ENCODE measurements at regions of chr11 and their contacts with region 1.

Region 1: DNA sequence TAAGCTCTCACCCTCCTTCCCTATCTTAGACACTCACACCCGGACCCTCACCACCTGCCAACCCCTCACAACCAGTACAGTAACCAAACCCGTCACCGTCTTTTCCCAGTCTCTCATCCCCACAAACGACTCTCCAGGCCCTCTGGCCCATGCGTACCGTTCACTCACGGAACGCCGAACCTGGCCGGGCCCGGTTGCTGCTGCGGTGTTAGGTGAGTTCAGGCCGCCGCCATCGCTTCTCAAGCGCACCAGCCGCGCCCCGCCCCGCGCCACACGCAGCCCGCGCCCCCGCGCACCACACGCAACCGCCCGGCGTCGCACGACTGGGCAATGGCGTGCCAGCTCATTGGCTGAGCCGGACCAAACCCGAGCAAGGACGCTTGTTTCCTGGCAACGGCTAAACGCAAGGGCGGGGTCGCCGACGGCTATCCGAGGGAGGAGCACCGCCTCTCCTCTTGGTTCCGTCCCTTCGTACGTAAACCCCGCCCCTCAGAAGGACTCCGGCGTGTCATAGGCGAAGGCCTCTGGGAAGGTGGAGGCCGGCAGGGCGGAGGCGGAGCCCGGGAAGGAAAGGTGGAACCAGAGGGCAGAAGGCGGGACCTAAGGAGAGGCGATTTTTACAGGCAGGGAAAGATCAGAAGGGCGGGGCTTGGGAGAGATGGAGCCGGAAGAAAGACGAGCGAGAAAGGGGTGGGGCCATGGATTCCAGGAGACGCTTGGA is at the start of gene FHIP1B:
- DNase-seq: peak; percentile 100
- H3K4me3 ChIP-seq: peak within 1 kb of the TSS; percentile 54 to 79
- H3K27ac ChIP-seq: peak within 1 kb of the TSS; percentile 78 to 83
- H3K4me1 ChIP-seq: peaks cover 0 to 12% of the 10 kb centered on the region in 2 donors
- H3K27me3 ChIP-seq: no peaks in the 10 kb centered on the region
- CTCF ChIP-seq: peak in 1 of 3 experiments; percentile 5
- total RNA-seq, gene FHIP1B: 31.9 TPM

Region 2: GRCh38 chr11:5684646-5685362 is 549.7 kb before region 1 on chr11 and contains the start of gene TRIM5:
- intact Hi-C with region 1: loop called (anchors 5 kb)
- DNase-seq: peak; percentile 70 to 96
- H3K4me3 ChIP-seq: peak within 1 kb of the TSS; percentile 60 to 64
- H3K27ac ChIP-seq: peak within 1 kb of the TSS; percentile 88 to 94
- H3K4me1 ChIP-seq: peaks cover 3 to 12% of the 10 kb centered on the region in 2 donors
- H3K27me3 ChIP-seq: no peaks in the 10 kb centered on the region
- CTCF ChIP-seq: peak; percentile 48 to 72 (median 55)
- total RNA-seq, gene TRIM5: 45.1 TPM

Region 3: DNA sequence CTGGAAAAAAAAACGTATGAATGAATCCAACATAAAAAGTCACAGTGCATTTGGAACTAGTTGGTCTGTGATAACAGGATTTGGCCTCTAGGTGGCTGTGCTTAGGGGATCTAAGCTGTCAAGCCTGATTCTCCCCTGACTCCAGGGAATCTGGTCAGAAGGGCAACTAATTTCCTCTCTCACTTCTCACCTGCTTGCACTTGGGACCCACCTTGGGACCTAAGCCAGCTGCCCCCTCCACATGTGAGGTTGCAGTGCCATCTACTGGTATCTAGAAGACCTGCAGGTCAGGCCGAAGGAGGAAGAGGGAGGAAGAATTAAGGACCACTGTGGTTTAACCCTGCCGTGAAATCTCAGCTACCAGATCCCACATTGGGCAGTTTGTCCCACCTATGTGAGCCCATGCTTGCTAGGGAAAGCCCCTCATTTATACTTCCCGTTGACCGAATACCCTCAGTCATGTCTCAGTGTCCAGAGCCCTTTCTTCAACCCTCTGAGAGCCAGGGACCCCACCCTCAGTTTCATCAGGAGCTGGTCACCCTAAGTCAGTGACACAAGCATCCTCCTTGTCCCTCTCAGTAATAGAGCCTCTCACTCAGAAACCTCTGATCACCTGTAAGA is 118.9 kb after region 1 on chr11:
- intact Hi-C with region 1: loop called (anchors 1 kb)
- DNase-seq: peak in 1 of 2 donors; percentile 72
- H3K4me3 ChIP-seq: no peak overlapping the region
- H3K27ac ChIP-seq: no peak overlapping the region
- H3K4me1 ChIP-seq: peaks cover 5 to 10% of the 10 kb centered on the region in 2 donors
- H3K27me3 ChIP-seq: no peaks in the 10 kb centered on the region
- CTCF ChIP-seq: peak; percentile 81 to 96 (median 95)

Region 4: GRCh38 chr11:6389921-6390724 is 155.6 kb after region 1 on chr11 and contains the start of gene SMPD1:
- intact Hi-C with region 1: loop called (anchors 1 kb)
- DNase-seq: peak; percentile 92 to 96
- H3K4me3 ChIP-seq: peak within 1 kb of the TSS; percentile 89 to 96
- H3K27ac ChIP-seq: peak within 1 kb of the TSS; percentile 90 to 95
- H3K4me1 ChIP-seq: peaks cover 9 to 14% of the 10 kb centered on the region in 2 donors
- H3K27me3 ChIP-seq: no peaks in the 10 kb centered on the region
- CTCF ChIP-seq: no peak
- total RNA-seq, gene SMPD1: 48.6 TPM

Region 5: GRCh38 chr11:6443269-6444003 is 208.9 kb after region 1 on chr11:
- intact Hi-C with region 1: no loop called
- DNase-seq: no peak
- H3K4me3 ChIP-seq: no peak overlapping the region
- H3K27ac ChIP-seq: peak overlapping the region; percentile 47 to 64
- H3K4me1 ChIP-seq: peaks cover 0 to 3% of the 10 kb centered on the region in 2 donors
- H3K27me3 ChIP-seq: no peaks in the 10 kb centered on the region
- CTCF ChIP-seq: peak; percentile 55 to 69 (median 60)

Region 6: DNA sequence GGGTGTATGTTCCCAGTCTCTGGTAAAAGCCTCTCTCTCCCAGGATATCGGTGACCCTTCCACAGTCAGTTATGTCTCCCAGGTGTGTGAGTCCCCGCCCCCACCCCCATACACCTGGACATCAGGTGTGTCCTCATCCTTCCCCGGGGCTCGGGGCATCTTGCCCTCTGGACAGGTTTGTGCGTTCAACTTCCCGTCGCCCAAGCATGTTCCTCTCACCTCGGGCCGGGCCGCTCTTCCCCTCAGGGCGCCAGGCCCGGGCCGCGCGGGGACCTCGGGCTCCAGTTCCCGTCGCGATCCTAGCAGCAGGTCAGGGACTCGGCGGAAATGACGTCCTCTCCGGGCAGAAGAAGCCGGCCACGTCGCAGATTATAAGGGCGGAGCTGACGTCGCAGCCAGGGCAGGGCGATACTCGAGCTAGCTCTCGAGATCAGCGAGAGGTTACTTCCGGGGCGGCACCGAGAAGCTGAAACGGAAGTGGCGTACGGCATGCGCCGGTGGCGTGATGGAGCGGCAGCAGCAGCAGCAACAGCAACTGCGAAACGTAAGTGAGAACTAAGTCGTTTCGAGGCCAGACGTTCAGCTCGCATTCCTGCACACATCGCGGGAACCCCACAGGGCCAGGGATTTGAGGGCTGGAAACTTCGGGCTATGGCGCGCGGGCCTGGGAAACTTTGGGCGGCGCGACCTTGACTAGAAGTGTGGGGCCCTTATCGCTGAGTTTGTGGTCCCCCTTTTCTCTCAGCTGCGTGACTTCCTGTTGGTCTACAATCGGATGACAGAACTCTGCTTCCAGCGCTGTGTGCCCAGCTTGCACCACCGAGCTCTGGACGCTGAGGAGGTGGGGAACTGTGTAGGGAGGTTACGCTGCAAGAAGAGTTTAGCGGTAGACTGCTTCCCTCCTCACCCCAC is 246.7 kb after region 1 on chr11 and contains the starts of genes ARFIP2 and TIMM10B:
- intact Hi-C with region 1: loop called (anchors 2 kb)
- DNase-seq: peak; percentile 96 to 99
- H3K4me3 ChIP-seq: peak within 1 kb of the TSS; percentile 92 to 94
- H3K27ac ChIP-seq: peak within 1 kb of the TSS; percentile 95
- H3K4me1 ChIP-seq: peaks cover 7 to 27% of the 10 kb centered on the region in 2 donors
- H3K27me3 ChIP-seq: no peaks in the 10 kb centered on the region
- CTCF ChIP-seq: no peak
- total RNA-seq, gene ARFIP2: 87.8 TPM
- total RNA-seq, gene TIMM10B: 19.2 TPM

Region 7: GRCh38 chr11:7513234-7514098 is 1278.9 kb after region 1 on chr11 and contains the start of gene PPFIBP2:
- intact Hi-C with region 1: loop called (anchors 10 kb)
- DNase-seq: peak; percentile 51 to 91
- H3K4me3 ChIP-seq: peak within 1 kb of the TSS; percentile 71 to 85
- H3K27ac ChIP-seq: peak within 1 kb of the TSS; percentile 90 to 94
- H3K4me1 ChIP-seq: peaks cover 5 to 25% of the 10 kb centered on the region in 2 donors
- H3K27me3 ChIP-seq: no peaks in the 10 kb centered on the region
- CTCF ChIP-seq: peak; percentile 43 to 64 (median 45)
- total RNA-seq, gene PPFIBP2: 4.2 TPM

Measured in ascending aorta (tissue), 2 donors.